ENCODE measurements at regions of chr1 and their contacts with region 1.

Region 1: DNA sequence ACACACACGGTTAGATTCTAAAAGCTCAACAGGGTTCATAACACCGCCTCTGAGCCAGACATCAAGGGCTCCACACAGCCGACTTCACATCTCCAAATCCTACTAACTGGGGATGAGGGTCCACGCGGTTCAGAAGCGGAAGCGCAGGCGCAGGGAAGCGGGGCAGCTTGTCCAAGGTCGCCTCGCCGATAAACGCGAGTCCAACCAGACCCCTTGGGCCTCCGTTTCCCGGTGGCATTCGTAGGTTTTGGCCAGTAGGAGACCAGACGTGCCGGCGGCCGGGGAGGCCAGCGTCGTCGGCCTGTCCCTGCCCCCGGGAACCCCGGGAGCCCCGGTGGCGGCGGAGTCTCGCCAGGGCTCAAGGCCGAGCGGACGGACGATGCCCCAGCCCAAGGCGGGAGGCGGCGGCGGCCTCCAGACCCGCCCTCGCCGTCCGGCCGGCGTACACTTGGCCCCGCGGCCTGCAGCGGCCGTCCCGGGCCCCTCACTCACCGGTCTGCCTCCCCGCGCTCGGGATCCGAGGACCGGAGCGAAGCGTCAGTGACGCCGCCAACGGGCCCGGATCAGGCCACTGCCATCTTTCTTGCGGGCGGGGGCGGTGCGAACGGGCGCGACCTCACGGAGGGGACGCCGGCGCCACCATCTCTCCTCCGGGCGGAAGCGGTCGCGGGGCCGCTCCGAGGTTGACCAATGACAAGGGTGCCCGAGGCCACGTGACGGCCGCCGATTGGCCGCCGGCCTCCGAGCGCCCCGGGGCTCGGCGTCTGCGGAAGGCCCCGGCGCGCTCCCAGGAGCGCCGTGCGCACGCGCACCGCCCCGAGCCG is at the start of gene SDF4:
- DNase-seq: peak; percentile 98
- total RNA-seq, gene SDF4: 139 TPM

Region 2: DNA sequence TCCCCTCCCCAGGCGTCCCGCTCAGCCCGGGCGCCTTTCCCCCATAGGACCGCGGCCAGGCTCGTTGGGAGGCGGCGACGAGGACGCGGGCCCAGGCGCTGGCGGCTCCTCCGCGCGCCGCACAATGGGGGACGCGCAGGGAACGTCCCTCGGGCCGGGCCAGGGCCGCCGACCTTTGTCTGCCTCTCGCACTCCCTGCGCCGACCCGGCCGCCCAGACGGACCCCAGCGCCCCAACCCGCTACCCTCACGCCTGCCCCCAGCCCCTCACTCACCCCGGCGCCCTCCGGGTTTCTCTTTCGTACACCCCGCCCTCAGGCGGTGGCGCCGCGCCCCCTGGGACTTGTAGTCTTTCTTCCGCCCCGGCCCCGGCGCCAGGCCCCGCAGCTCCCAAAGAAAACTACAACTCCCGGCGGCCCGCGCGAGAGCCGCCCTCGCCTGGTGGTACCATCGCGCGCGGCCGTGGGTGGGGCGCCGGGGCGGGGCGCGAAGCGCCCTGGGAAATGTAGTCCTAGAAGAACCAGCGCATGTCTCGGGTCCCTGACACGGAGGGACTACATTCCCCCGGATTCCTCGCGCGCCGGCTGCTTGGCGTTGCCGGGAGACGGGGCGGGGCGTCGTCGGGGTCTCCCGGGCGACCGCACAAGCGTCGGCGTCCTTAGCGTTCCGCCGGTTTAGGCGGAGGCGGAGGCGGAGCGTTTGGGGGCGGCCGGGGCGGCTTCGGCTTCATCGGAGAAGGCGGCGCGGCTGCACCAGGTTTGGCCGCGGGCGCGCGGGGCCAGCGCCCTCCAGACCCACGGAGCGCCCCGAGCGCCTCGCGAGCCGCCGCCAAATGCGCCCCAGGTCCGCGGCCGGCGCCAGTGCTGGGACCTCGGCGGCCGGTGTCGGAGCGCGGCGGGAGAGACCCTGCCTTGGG is 115.6 kb before region 1 on chr1 and contains the start of gene C1orf159:
- intact Hi-C with region 1: loop called (anchors 2 kb)
- DNase-seq: peak; percentile 99
- total RNA-seq, gene C1orf159: 5.4 TPM

Region 3: GRCh38 chr1:1157426-1157913 is 74.1 kb before region 1 on chr1:
- intact Hi-C with region 1: loop called (anchors 5 kb)
- DNase-seq: peak; percentile 94

Region 4: GRCh38 chr1:1273512-1274298 is 42.1 kb after region 1 on chr1 and contains the start of gene UBE2J2:
- intact Hi-C with region 1: loop called (anchors 1 kb)
- DNase-seq: peak; percentile 97
- total RNA-seq, gene UBE2J2: 37.2 TPM

Region 5: DNA sequence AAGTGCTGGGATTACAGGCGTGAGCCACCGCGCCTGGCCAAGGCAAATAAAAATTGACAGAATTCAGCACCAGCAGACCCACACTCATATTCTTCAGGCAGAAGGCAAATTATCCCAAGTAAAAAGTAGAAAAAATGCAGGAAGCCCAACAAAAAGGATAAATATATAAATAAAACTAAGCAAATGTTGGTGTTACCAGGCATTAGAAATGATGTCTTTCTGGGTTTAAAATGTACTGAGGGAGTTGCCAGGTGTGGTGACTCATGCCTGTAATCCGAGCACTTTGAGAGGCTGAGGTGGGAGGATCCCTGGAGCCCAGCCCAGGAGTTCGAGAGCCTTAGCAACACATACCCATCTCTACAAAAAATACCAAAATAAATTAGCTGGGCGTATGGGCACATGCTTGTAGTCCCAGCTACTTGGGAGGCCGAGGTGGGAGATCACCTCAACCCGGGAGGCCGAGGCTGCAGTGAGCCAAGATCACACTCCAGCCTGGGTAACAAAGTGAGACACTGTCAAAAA is 86.6 kb after region 1 on chr1:
- intact Hi-C with region 1: no loop called
- DNase-seq: no peak

Region 6: DNA sequence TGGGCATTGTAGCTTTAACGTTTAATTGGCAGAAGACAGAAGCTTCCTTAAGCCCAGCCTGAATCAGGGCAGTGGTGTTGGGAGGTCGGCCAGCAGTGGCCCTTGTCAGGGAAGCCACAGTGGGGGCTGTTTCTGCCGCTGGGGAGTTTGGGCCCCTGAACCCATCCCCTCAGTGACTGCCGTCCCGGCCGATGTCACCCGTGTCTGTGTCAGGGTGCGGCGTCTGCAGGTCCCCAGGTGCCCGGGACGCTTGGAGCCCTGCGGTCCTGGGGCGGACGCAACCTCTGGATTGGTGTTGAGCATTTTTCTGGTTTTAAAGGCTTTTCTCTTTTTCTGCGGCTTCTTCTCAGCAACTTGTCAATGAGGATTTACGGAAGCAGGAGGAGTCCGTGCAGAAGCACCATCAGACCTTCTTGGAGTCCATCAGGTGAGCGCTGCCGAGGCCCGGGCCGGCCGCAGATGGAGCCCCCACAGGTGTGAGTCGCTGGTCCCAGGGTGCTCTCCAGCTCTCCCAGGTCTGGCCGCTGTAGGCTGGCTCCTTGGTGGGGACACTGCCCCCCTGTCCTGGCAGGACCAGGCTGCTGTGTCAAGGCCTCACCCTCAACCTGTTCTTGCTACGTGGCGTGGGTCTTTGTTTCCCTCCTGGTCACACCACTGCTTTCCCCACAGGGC is 220.2 kb after region 1 on chr1:
- intact Hi-C with region 1: no loop called
- DNase-seq: no peak

Measured in cardiac septum (tissue), 1 donor.